Left ventricle myocardium inferior (tissue), 1 donor: ENCODE measurements at regions of chr19 and their contacts with region 1.

Region 1: GRCh38 chr19:3665681-3666544 is 34.4 kb downstream of the PIP5K1C start:
- DNase-seq: peak; percentile 72
- H3K4me3 ChIP-seq: no peak overlapping the region
- H3K27ac ChIP-seq: no peak overlapping the region
- H3K4me1 ChIP-seq: peaks cover 60% of the 10 kb centered on the region
- H3K27me3 ChIP-seq: no peaks in the 10 kb centered on the region
- CTCF ChIP-seq: peak; percentile 98

Region 2: GRCh38 chr19:3700221-3701032 is 34.5 kb after region 1 on chr19 and contains the start of gene PIP5K1C:
- intact Hi-C with region 1: loop called (anchors 5 kb)
- DNase-seq: peak; percentile 91
- H3K4me3 ChIP-seq: peak within 1 kb of the TSS; percentile 94
- H3K27ac ChIP-seq: peak within 1 kb of the TSS; percentile 93
- H3K4me1 ChIP-seq: peaks cover 34% of the 10 kb centered on the region
- H3K27me3 ChIP-seq: peaks cover 7% of the 10 kb centered on the region
- CTCF ChIP-seq: peak; percentile 87
- total RNA-seq, gene PIP5K1C: 31.6 TPM